Naive thymus-derived CD4-positive, alpha-beta T cell (primary cell): ENCODE measurements at regions of chr3 and their contacts with region 1.

Region 1: DNA sequence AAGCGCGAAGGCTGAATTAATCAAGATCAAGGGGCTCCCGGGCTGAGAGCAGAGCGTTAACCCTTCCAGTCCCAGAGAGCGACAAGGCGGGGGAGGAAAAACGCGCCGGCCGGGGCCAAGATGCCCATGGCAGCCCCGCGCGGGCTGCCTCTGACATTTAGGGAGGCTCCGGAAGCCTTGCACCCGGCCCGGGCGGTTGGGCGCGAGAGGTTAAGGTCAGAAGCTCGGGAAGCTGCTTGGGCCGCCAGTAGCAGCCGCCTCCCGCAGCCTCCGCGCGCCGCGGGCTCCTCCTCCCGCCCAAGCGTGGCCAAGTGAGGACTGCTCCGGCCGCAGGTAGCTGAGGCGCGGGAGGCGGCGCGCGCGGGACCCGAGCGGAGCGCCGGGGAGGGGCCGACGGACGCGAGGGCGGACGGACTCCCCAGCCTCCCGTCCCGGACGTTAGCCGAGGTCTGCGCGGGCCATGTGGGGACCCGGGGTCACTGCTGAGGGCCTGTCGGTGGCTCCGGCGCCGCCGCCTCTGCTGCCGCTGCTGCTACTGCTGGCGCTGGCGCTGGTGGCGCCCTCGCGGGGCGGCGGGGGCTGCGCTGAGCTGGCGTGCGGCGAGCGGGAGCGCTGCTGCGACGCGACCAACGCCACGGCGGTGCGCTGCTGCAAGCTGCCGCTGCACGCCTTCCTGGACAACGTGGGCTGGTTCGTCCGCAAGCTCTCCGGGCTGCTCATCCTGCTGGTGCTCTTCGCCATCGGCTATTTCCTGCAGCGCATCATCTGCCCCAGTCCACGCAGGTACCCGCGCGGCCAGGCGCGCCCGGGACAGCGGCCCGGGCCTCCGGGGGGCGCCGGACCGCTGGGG is at the start of gene C3orf80:
- DNase-seq: peak in 8 of 9 donors; percentile 7 to 64 (median 34)
- ATAC-seq: peak; percentile 81
- H3K4me3 ChIP-seq: peak within 1 kb of the TSS; percentile 46
- H3K4me3 Mint-ChIP-seq: peak within 1 kb of the TSS; percentile 79 to 92 (median 86)
- H3K27ac ChIP-seq: no peak within 1 kb of the TSS
- H3K27ac Mint-ChIP-seq: no peak within 1 kb of the TSS
- H3K4me1 ChIP-seq: peaks cover 8 to 17% of the 10 kb centered on the region in 2 donors
- H3K4me1 Mint-ChIP-seq: peaks cover 9 to 23% (median 19%) of the 10 kb centered on the region in 7 donors
- H3K27me3 ChIP-seq: peaks cover 11 to 22% of the 10 kb centered on the region in 2 donors
- H3K27me3 Mint-ChIP-seq: peaks cover 46 to 75% (median 53%) of the 10 kb centered on the region in 5 donors
- total RNA-seq, gene C3orf80: 0.19 TPM in 1 of 5 experiments, not detected in the others

Region 2: GRCh38 chr3:160038862-160039562 is 186.4 kb before region 1 on chr3:
- CTCF ChIA-PET with region 1: no interaction called
- POLR2A ChIA-PET with region 1: no interaction called
- intact Hi-C with region 1: loop called in 1 of 2 experiments (anchors 10 kb)
- DNase-seq: peak in 1 of 9 donors; percentile 25
- ATAC-seq: peak; percentile 32
- H3K4me3 ChIP-seq: no peak overlapping the region
- H3K4me3 Mint-ChIP-seq: peak overlapping the region in 2 of 10 donors; percentile 40 to 56
- H3K27ac ChIP-seq: no peak overlapping the region
- H3K27ac Mint-ChIP-seq: no peak overlapping the region
- H3K4me1 ChIP-seq: no peaks in the 10 kb centered on the region
- H3K4me1 Mint-ChIP-seq: peaks cover 0 to 11% (median 0%) of the 10 kb centered on the region in 7 donors
- H3K27me3 ChIP-seq: no peaks in the 10 kb centered on the region
- H3K27me3 Mint-ChIP-seq: peaks cover 36 to 57% (median 38%) of the 10 kb centered on the region in 5 donors

Region 3: GRCh38 chr3:160184655-160185054 is 40.7 kb before region 1 on chr3:
- CTCF ChIA-PET with region 1: no interaction called
- POLR2A ChIA-PET with region 1: no interaction called
- intact Hi-C with region 1: no loop called
- DNase-seq: no peak
- ATAC-seq: no peak
- H3K4me3 ChIP-seq: no peak overlapping the region
- H3K4me3 Mint-ChIP-seq: no peak overlapping the region
- H3K27ac ChIP-seq: no peak overlapping the region
- H3K27ac Mint-ChIP-seq: no peak overlapping the region
- H3K4me1 ChIP-seq: no peaks in the 10 kb centered on the region
- H3K4me1 Mint-ChIP-seq: no peaks in the 10 kb centered on the region
- H3K27me3 ChIP-seq: no peaks in the 10 kb centered on the region
- H3K27me3 Mint-ChIP-seq: peaks cover 19 to 29% (median 23%) of the 10 kb centered on the region in 5 donors

Region 4: GRCh38 chr3:160200353-160200752 is 25.0 kb before region 1 on chr3:
- CTCF ChIA-PET with region 1: no interaction called
- POLR2A ChIA-PET with region 1: interaction called, 3 read pairs
- intact Hi-C with region 1: loop called in 1 of 2 experiments (anchors 1 kb)
- DNase-seq: no peak
- ATAC-seq: no peak
- H3K4me3 ChIP-seq: no peak overlapping the region
- H3K4me3 Mint-ChIP-seq: no peak overlapping the region
- H3K27ac ChIP-seq: no peak overlapping the region
- H3K27ac Mint-ChIP-seq: no peak overlapping the region
- H3K4me1 ChIP-seq: no peaks in the 10 kb centered on the region
- H3K4me1 Mint-ChIP-seq: peaks cover 0 to 1% (median 0%) of the 10 kb centered on the region in 7 donors
- H3K27me3 ChIP-seq: no peaks in the 10 kb centered on the region
- H3K27me3 Mint-ChIP-seq: peaks cover 0 to 5% (median 2%) of the 10 kb centered on the region in 5 donors

Region 5: GRCh38 chr3:160340351-160340750 is 115.0 kb after region 1 on chr3:
- CTCF ChIA-PET with region 1: no interaction called
- POLR2A ChIA-PET with region 1: no interaction called
- intact Hi-C with region 1: no loop called
- DNase-seq: no peak
- ATAC-seq: no peak
- H3K4me3 ChIP-seq: no peak overlapping the region
- H3K4me3 Mint-ChIP-seq: no peak overlapping the region
- H3K27ac ChIP-seq: no peak overlapping the region
- H3K27ac Mint-ChIP-seq: no peak overlapping the region
- H3K4me1 ChIP-seq: no peaks in the 10 kb centered on the region
- H3K4me1 Mint-ChIP-seq: no peaks in the 10 kb centered on the region
- H3K27me3 ChIP-seq: no peaks in the 10 kb centered on the region
- H3K27me3 Mint-ChIP-seq: no peaks in the 10 kb centered on the region

Region 6: GRCh38 chr3:160676547-160677303 is 451.3 kb after region 1 on chr3 and contains the start of gene ARL14:
- CTCF ChIA-PET with region 1: no interaction called
- POLR2A ChIA-PET with region 1: no interaction called
- intact Hi-C with region 1: no loop called
- DNase-seq: no peak
- ATAC-seq: no peak
- H3K4me3 ChIP-seq: no peak within 1 kb of the TSS
- H3K4me3 Mint-ChIP-seq: no peak within 1 kb of the TSS
- H3K27ac ChIP-seq: no peak within 1 kb of the TSS
- H3K27ac Mint-ChIP-seq: no peak within 1 kb of the TSS
- H3K4me1 ChIP-seq: no peaks in the 10 kb centered on the region
- H3K4me1 Mint-ChIP-seq: no peaks in the 10 kb centered on the region
- H3K27me3 ChIP-seq: no peaks in the 10 kb centered on the region
- H3K27me3 Mint-ChIP-seq: peaks cover 5 to 16% (median 13%) of the 10 kb centered on the region in 5 donors
- total RNA-seq, gene ARL14: not detected

Region 7: DNA sequence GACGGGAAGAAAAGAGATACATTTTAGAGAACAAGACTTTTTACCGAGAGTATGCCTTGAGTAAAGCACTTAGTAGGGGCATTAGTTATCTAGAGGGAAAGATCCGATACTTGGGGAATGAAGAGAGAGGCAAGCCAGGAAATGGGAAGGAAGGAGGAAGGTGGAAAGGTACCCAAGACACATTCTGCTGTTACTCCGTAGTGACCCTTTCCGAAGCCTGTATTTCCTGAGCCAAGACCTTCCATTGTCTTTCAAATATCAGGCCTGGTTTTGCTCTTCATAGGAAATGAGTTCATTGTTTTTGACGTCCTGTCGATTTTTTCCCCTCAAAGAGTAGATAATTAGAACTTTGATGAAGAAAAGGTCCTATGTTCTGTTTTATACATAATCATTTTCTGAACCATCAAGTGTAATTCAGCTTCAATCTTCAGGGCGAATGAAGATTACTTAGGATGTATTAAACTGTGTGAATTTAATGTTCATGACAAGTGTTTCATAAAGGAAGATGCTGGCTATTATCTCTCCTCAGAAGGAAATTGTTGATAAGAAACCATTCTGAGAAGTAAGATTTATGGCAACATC is 626.3 kb after region 1 on chr3:
- CTCF ChIA-PET with region 1: no interaction called
- POLR2A ChIA-PET with region 1: no interaction called
- intact Hi-C with region 1: no loop called
- DNase-seq: no peak
- ATAC-seq: no peak
- H3K4me3 ChIP-seq: no peak overlapping the region
- H3K4me3 Mint-ChIP-seq: no peak overlapping the region
- H3K27ac ChIP-seq: no peak overlapping the region
- H3K27ac Mint-ChIP-seq: no peak overlapping the region
- H3K4me1 ChIP-seq: no peaks in the 10 kb centered on the region
- H3K4me1 Mint-ChIP-seq: peaks cover 0 to 4% (median 0%) of the 10 kb centered on the region in 7 donors
- H3K27me3 ChIP-seq: no peaks in the 10 kb centered on the region
- H3K27me3 Mint-ChIP-seq: peaks cover 0 to 16% (median 6%) of the 10 kb centered on the region in 5 donors